Cardiac septum (tissue), 1 donor: ENCODE measurements at regions of chr20 and their contacts with region 1.

Region 1: DNA sequence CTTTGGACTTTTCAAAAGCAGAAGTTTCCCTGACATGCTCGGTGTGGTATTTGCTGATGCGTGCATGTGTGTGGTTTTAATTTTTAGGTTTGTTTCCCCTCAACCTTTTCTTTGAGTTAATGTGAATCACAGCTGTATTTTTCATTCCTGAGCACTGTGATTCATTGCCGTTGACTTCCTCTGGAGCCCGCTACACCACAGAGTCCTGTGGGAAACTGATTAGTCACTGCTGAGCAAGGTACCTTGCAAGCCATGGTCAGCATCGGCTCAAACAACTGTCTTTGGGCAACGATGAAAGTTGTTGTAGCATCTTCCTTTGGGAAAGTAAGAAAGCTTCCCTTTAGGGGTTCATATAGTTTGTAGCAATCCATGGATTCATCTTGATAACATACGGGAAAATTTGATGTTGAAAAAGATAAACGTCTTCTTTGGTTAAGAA is 57.5 kb downstream of the RIN2 start:
- DNase-seq: no peak

Region 2: GRCh38 chr20:19934792-19935491 is 119.4 kb after region 1 on chr20:
- intact Hi-C with region 1: loop called (anchors 10 kb)
- DNase-seq: no peak